ENCODE measurements at regions of chr12 and their contacts with region 1.

Region 1: GRCh38 chr12:10721651-10722501 is 1.2 kb downstream of the YBX3 start:
- DNase-seq: peak; percentile 93
- H3K4me3 ChIP-seq: peak overlapping the region; percentile 77
- H3K27ac ChIP-seq: peak overlapping the region; percentile 95
- H3K4me1 ChIP-seq: peaks cover 65% of the 10 kb centered on the region
- H3K27me3 ChIP-seq: no peaks in the 10 kb centered on the region
- CTCF ChIP-seq: no peak

Region 2: GRCh38 chr12:10634427-10634826 is 87.4 kb before region 1 on chr12:
- CTCF ChIA-PET with region 1: no interaction called
- POLR2A ChIA-PET with region 1: interaction called, 14 read pairs
- intact Hi-C with region 1: no loop called
- DNase-seq: peak; percentile 86 to 89
- H3K4me3 ChIP-seq: no peak overlapping the region
- H3K27ac ChIP-seq: peak overlapping the region; percentile 35
- H3K4me1 ChIP-seq: peaks cover 36% of the 10 kb centered on the region
- H3K27me3 ChIP-seq: no peaks in the 10 kb centered on the region
- CTCF ChIP-seq: no peak

Region 3: GRCh38 chr12:10740182-10740581 is 18.3 kb after region 1 on chr12:
- CTCF ChIA-PET with region 1: no interaction called
- POLR2A ChIA-PET with region 1: interaction called, 9 read pairs
- intact Hi-C with region 1: loop called (anchors 1 kb)
- DNase-seq: peak; percentile 79 to 86
- H3K4me3 ChIP-seq: no peak overlapping the region
- H3K27ac ChIP-seq: peak overlapping the region; percentile 74
- H3K4me1 ChIP-seq: peaks cover 25% of the 10 kb centered on the region
- H3K27me3 ChIP-seq: no peaks in the 10 kb centered on the region
- CTCF ChIP-seq: no peak

Region 4: DNA sequence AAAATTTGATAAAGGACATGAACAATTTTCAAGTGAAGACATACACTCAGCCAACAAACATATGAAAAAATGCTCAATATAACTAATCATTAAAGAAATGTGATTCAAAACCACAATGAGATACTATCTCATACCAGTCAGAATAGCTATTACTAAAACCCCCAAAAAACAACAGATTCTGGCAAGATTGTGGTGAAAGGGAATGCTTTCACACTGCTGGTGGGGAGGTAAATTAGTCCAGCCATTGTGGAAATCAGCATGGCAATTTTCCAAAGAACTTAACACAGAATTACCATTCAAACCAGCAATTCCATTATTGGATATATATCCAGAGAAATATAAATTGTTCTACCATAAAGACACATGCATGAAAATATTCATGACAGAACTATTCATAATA is 235.9 kb after region 1 on chr12:
- CTCF ChIA-PET with region 1: no interaction called
- POLR2A ChIA-PET with region 1: no interaction called
- intact Hi-C with region 1: no loop called
- DNase-seq: no peak
- H3K4me3 ChIP-seq: no peak overlapping the region
- H3K27ac ChIP-seq: no peak overlapping the region
- H3K4me1 ChIP-seq: no peaks in the 10 kb centered on the region
- H3K27me3 ChIP-seq: no peaks in the 10 kb centered on the region
- CTCF ChIP-seq: no peak

Region 5: DNA sequence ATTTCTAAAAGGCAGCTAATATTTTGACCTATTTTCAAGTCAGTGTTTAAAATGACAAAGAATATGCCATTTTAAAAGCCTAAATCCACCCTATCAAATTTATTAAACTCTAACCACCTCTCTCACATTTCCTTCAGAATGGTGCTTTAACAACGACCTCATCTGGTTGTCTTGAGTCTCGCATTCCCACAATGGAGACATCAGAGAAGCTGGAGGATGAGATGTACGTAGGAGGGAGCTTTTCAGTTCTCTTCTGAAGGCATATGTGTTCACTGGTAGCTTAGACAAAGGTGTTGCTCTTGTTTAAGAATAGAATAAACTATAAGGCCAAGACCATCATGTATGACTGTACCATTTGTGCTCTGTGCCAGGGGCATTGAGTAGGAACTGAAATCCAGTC is 1431.7 kb after region 1 on chr12:
- CTCF ChIA-PET with region 1: no interaction called
- POLR2A ChIA-PET with region 1: no interaction called
- intact Hi-C with region 1: no loop called
- DNase-seq: no peak
- H3K4me3 ChIP-seq: no peak overlapping the region
- H3K27ac ChIP-seq: no peak overlapping the region
- H3K4me1 ChIP-seq: no peaks in the 10 kb centered on the region
- H3K27me3 ChIP-seq: no peaks in the 10 kb centered on the region
- CTCF ChIP-seq: no peak

Region 6: GRCh38 chr12:12716793-12717585 is 1995.1 kb after region 1 on chr12 and contains the start of gene CDKN1B:
- CTCF ChIA-PET with region 1: no interaction called
- POLR2A ChIA-PET with region 1: no interaction called
- intact Hi-C with region 1: loop called (anchors 5 kb)
- DNase-seq: peak; percentile 82 to 98
- H3K4me3 ChIP-seq: peak within 1 kb of the TSS; percentile 96
- H3K27ac ChIP-seq: peak within 1 kb of the TSS; percentile 98
- H3K4me1 ChIP-seq: peaks cover 38% of the 10 kb centered on the region
- H3K27me3 ChIP-seq: no peaks in the 10 kb centered on the region
- CTCF ChIP-seq: no peak
- total RNA-seq, gene CDKN1B: 54.9 and 67.5 TPM in 2 replicates

Measured in PC-9 (cell line).